ENCODE measurements at regions of chr14 and their contacts with region 1.

Region 1: DNA sequence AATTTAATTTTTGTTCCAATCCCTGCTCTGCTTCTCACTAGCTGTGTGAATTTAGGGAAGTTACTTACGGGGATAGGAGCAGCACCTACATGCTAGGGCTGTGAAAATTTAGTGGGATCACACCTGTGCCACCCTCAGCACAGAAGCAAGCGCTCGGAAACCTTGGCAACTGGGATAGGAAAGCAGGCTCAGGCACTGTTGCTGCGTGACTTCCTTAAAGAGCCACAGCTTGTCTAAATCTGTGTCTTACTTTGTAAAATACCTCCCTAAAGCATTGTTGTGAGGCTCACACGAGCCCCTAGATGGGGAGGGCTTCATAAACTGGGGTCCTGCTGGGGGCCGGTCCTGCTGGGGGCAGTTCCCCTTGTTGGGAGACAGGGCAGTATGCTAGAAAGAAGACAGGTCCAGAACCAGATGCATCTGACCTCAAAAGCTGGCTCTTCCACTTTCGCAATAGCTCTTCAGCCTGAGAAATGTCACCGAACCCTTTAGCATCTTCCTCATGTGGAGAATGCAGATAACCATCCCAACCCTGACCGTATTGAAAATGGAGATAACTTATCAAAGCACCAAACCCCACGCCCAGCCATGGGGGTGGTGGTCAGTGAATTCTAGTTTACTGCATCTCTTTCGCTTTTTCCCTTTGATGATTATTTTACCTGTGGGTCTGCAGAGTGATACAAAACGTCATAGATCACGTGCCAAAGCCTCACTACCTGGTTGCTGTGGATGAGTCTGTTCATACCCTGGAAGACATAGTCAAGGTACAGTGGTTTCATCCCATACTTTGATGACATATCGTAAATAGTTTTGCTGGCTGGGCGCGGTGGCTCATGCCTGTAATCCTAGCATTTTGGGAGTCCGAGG is 54.1 kb downstream of the AK7 start:
- DNase-seq: peak in 41 of 42 donors; percentile 24 to 88 (median 59)

Region 2: DNA sequence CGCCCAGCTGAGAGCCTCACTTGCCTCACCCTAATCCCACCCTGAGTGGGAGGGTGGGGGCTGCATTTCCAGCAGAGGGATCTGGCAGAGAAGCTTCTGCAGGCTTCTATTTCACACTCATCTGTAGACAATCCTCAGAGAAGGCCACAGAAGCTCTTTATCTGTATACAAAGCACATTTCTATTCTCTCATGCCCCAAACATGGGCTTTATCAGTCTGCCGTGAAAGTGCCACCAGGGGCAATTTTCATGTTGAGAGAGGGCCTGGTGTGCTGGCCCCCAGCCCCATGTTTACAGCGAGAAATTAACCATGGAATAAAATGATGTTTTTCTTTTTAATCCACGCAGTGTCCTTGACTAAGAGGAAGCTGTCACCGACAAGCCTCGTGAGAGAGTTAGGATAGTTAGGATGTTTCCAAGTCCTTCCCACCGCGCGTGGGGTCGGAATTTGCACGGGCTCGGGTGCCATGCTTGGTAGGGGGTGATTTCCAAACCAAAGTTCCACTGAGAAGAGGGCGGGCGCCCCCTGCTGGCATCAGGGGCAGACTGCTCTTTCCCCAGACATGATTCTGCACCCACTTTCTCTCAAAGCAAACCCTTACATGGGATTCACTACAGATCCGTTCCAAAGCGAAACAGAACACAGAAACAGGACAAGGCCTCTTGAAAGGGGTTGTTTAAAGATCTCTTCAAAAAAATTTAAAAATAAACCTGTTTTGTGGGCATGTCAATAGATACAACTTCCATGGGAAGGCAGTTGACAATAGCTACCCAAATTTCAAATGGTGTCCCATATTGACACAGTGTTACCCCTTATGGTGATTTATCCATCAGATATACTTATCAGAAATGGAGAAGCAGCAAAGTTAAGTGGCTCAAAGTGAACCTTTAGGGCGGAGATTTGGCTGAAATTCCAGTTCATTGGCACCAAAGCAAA is 170.6 kb before region 1 on chr14:
- intact Hi-C with region 1: no loop called
- DNase-seq: peak; percentile 70 to 96 (median 88)

Region 3: GRCh38 chr14:96554315-96554910 is 108.3 kb after region 1 on chr14:
- intact Hi-C with region 1: loop called (anchors 5 kb)
- DNase-seq: peak in 8 of 42 donors; percentile 9 to 69 (median 37)